HepG2 (cell line): ENCODE measurements at regions of chr20 and their contacts with region 1.

Region 1: GRCh38 chr20:5205348-5206210 is 78.8 kb downstream of the CDS2 start:
- DNase-seq: peak; percentile 80
- ATAC-seq: peak; percentile 84
- H3K4me3 ChIP-seq: no peak overlapping the region
- H3K27ac ChIP-seq: no peak overlapping the region
- H3K4me1 ChIP-seq: peaks cover 35% of the 10 kb centered on the region
- H3K27me3 ChIP-seq: no peaks in the 10 kb centered on the region
- CTCF ChIP-seq: peak; percentile 97
- EP300 ChIP-seq: no peak
- POLR2A ChIP-seq: no peak
- RAD21 ChIP-seq: peak; percentile 98

Region 2: GRCh38 chr20:5168651-5169396 is 36.8 kb before region 1 on chr20:
- CTCF ChIA-PET with region 1: no interaction called
- POLR2A ChIA-PET with region 1: no interaction called
- in situ Hi-C with region 1: no loop called
- intact Hi-C with region 1: no loop called
- DNase-seq: no peak
- ATAC-seq: no peak
- H3K4me3 ChIP-seq: no peak overlapping the region
- H3K27ac ChIP-seq: no peak overlapping the region
- H3K4me1 ChIP-seq: peaks cover 55% of the 10 kb centered on the region
- H3K27me3 ChIP-seq: no peaks in the 10 kb centered on the region
- CTCF ChIP-seq: no peak
- EP300 ChIP-seq: no peak
- POLR2A ChIP-seq: no peak
- RAD21 ChIP-seq: no peak

Region 3: DNA sequence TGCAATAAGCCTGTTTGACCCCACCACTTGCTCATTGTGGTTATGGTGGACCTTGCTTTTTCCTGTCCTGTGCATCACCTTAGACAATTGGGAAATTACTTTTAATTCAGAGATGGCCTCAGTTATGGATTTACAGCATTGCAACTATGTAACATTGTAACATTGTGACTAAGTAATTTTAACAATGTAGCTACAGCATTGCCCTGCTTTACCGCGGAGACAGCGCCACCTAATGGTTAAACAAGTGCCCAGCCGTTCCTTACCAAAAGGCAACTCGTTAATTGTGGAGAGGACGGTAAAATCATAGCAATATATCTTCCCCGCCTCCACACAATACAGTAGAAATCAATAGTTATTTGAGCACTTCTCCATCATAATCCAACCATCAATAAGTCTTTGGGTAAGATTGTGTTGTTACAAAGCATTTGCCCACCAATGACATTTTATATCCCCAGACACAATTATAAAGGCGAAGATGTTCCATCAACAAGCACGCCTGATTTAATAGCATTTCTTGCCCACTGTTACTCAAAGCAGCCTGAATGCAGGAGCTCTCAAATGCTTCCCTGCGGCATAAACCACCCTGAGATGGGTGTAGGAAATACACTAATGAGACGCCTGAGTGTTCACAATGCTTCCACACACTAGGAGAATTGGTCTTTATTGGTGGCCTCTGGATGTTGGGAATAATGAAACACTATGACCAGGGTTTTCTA is 17.5 kb after region 1 on chr20:
- CTCF ChIA-PET with region 1: interaction called, 66 read pairs
- POLR2A ChIA-PET with region 1: no interaction called
- in situ Hi-C with region 1: no loop called
- intact Hi-C with region 1: loop called (anchors 1 kb)
- DNase-seq: peak; percentile 67
- ATAC-seq: peak; percentile 75
- H3K4me3 ChIP-seq: no peak overlapping the region
- H3K27ac ChIP-seq: no peak overlapping the region
- H3K4me1 ChIP-seq: peaks cover 17% of the 10 kb centered on the region
- H3K27me3 ChIP-seq: no peaks in the 10 kb centered on the region
- CTCF ChIP-seq: peak; percentile 98
- EP300 ChIP-seq: no peak
- POLR2A ChIP-seq: no peak
- RAD21 ChIP-seq: peak; percentile 95